PC-9 (cell line): ENCODE measurements at regions of chr15 and their contacts with region 1.

Region 1: DNA sequence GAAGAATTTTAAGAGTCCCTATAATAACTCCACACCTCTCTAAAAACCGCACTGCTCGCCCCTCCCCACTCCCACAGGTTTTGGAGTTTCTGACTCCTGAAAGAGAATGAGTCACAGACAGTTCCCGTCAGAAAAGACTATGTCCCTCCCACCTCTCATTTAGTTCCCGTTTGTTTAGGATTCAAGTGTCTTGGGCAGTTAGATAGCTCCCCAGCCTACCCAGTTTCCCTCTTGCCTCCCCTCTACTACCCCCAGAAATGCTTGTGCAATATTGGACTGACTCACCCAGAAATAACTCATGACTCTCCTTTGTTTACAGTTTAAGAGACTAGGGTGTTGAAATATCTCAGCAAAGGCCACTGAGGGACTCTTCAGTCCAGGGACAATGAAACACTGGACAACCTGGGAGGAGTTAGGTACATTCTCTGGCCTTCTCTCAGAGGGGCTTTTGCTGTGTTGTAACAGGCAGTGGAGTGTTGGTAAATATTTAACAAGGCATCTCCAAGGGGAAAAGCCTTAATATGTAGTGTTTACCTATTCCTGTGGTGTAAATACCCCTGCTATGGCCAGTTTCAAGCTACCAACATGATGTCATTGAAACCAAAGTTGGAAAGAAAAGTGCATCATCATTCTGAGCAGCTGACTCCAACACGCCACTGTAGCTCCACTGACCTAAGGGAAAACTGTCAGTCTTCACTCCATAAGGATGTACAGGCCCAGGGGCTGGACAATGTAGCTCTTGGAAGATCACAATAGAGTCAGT is 96.1 kb upstream of the CHD2 start:
- DNase-seq: peak; percentile 92 to 100
- H3K4me3 ChIP-seq: no peak overlapping the region; the same call in 1 of the 2 replicates
- H3K27ac ChIP-seq: peak overlapping the region; percentile 98
- H3K4me1 ChIP-seq: peaks cover 57% of the 10 kb centered on the region
- H3K27me3 ChIP-seq: no peaks in the 10 kb centered on the region
- CTCF ChIP-seq: no peak

Region 2: GRCh38 chr15:92617549-92618520 is 186.2 kb before region 1 on chr15:
- CTCF ChIA-PET with region 1: no interaction called
- POLR2A ChIA-PET with region 1: interaction called, 29 read pairs
- intact Hi-C with region 1: no loop called
- DNase-seq: peak; percentile 40 to 57
- H3K4me3 ChIP-seq: no peak overlapping the region
- H3K27ac ChIP-seq: 0 out of 2 replicates have a peak overlapping the region, but pooled peaks have one; percentile 11
- H3K4me1 ChIP-seq: no peaks in the 10 kb centered on the region; the same call in 1 of the 2 replicates
- H3K27me3 ChIP-seq: no peaks in the 10 kb centered on the region
- CTCF ChIP-seq: no peak

Region 3: GRCh38 chr15:92747047-92747446 is 57.0 kb before region 1 on chr15:
- CTCF ChIA-PET with region 1: no interaction called
- POLR2A ChIA-PET with region 1: no interaction called
- intact Hi-C with region 1: no loop called
- DNase-seq: no peak
- H3K4me3 ChIP-seq: no peak overlapping the region
- H3K27ac ChIP-seq: no peak overlapping the region
- H3K4me1 ChIP-seq: peaks cover 11% of the 10 kb centered on the region
- H3K27me3 ChIP-seq: no peaks in the 10 kb centered on the region
- CTCF ChIP-seq: no peak

Region 4: DNA sequence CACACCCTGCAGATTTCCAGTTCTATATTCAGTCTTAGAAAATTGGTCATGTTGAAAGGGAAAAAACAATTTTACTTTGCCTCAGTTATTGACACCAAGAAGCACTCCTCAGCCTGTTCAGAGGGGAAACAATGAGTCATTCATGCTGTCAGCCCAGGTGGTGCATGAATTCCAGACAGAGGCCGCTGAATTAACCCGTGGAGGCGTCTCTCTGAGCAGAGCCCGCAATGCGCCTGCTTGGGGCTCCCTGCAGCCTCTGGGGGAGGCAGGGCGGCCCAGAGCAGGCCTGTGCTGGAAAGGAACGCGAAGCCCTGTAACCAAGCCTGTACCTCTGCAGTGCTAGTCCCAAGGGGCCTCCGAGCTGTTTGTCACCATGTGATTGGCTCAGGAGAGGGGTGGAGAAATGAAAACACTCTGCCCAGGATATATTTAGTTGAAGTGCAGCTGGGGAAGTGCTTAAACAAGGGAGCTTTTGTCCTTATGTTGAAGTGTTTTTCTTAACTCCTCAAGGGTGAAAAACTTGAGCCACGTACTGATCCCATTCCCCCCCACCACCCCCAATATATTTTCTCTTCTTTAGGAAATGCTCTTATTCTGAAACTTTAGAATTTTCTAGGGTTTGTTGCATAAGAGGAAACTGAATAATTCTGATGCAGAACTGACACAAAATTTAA is 27.8 kb after region 1 on chr15:
- CTCF ChIA-PET with region 1: no interaction called
- POLR2A ChIA-PET with region 1: no interaction called
- intact Hi-C with region 1: no loop called
- DNase-seq: peak; percentile 93 to 94
- H3K4me3 ChIP-seq: peak overlapping the region; percentile 35
- H3K27ac ChIP-seq: peak overlapping the region; percentile 76
- H3K4me1 ChIP-seq: peaks cover 35% of the 10 kb centered on the region
- H3K27me3 ChIP-seq: no peaks in the 10 kb centered on the region
- CTCF ChIP-seq: no peak

Region 5: GRCh38 chr15:92848852-92849598 is 45.0 kb after region 1 on chr15:
- CTCF ChIA-PET with region 1: no interaction called
- POLR2A ChIA-PET with region 1: no interaction called
- intact Hi-C with region 1: no loop called
- DNase-seq: no peak
- H3K4me3 ChIP-seq: no peak overlapping the region
- H3K27ac ChIP-seq: no peak overlapping the region
- H3K4me1 ChIP-seq: peaks cover 27% of the 10 kb centered on the region
- H3K27me3 ChIP-seq: no peaks in the 10 kb centered on the region
- CTCF ChIP-seq: no peak

Region 6: GRCh38 chr15:92917606-92918407 is 113.8 kb after region 1 on chr15:
- CTCF ChIA-PET with region 1: no interaction called
- POLR2A ChIA-PET with region 1: interaction called, 5 read pairs
- intact Hi-C with region 1: loop called (anchors 1 kb)
- DNase-seq: peak; percentile 88 to 94
- H3K4me3 ChIP-seq: peak overlapping the region; percentile 42; the same call in 1 of the 2 replicates
- H3K27ac ChIP-seq: peak overlapping the region; percentile 97
- H3K4me1 ChIP-seq: peaks cover 97% of the 10 kb centered on the region
- H3K27me3 ChIP-seq: no peaks in the 10 kb centered on the region
- CTCF ChIP-seq: peak; percentile 91

Region 7: GRCh38 chr15:92979011-92979701 is 175.1 kb after region 1 on chr15:
- CTCF ChIA-PET with region 1: no interaction called
- POLR2A ChIA-PET with region 1: no interaction called
- intact Hi-C with region 1: loop called (anchors 1 kb)
- DNase-seq: no peak
- H3K4me3 ChIP-seq: no peak overlapping the region
- H3K27ac ChIP-seq: peak overlapping the region; percentile 31
- H3K4me1 ChIP-seq: peaks cover 41% of the 10 kb centered on the region
- H3K27me3 ChIP-seq: no peaks in the 10 kb centered on the region
- CTCF ChIP-seq: no peak

Region 8: DNA sequence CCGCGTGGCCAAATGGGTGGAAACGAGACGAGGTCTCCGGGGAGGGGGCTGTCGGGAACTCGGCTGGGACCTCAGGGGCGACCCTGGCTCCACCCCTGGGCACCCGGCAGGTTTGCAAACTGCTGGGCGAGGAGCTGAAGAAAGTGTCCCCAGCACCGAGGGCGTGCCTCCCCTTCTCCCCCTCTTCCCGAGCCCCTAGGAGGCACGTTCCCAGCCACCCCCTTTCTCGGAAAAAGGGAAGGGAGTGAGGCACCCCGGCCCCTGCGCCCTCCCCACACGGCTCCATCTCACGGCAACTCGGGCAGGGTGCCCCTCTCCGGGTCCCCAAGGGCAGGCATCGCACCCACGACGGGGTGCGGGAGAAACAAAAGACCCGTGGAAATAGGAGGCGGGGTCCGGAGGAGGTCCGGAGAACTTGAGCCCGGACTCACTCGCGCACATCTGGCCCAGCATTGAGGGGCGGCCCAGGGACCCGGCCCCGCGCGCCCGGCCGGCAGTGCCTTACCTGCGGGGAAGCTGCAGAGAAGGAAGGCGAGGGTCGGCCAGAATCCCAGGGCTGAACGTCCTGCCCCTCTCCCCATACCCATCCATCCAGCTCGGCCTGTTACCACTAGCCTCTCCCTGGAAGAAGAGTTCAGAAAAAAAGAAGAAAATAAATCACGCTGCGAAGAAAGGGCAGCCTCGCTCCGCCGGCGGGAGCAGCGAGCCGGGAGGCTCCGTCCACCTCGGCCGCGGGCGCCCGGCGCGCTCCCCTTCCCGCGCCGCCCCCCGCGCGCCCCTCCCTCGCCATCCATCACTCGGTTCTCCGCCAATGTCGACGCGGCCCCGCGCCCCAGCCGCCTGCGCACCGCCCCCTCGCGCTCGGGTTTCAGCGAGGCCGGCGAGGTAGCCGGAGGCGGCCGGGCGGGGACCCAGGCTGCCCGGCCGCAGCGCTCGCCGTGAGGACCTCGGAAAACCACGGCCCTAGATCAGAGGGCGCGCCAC is 268.7 kb after region 1 on chr15:
- CTCF ChIA-PET with region 1: no interaction called
- POLR2A ChIA-PET with region 1: no interaction called
- intact Hi-C with region 1: loop called (anchors 5 kb)
- DNase-seq: peak; percentile 60 to 84
- H3K4me3 ChIP-seq: peak overlapping the region; percentile 79
- H3K27ac ChIP-seq: no peak overlapping the region
- H3K4me1 ChIP-seq: peaks cover 9% of the 10 kb centered on the region
- H3K27me3 ChIP-seq: peaks cover 19% of the 10 kb centered on the region
- CTCF ChIP-seq: no peak

Region 9: DNA sequence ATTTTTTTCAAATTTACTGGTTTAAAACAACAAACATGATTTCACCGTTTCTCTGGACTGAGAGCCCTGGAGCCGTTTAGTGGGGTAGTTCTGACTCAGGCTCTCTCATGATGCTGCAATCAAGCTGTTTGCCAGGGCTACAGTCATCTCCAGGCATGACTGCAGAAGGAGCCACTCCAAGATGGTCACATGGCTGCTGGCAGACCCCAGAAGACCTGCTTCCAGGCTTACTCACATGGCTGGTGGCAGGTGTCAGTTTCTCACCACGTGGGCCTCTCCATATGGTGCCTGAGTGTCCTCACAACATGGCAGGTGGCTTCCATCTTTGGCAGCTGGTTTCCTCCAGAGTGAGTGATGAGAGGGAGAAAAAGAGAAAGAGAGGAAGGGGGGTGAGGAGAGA is 663.3 kb after region 1 on chr15:
- CTCF ChIA-PET with region 1: no interaction called
- POLR2A ChIA-PET with region 1: no interaction called
- intact Hi-C with region 1: no loop called
- DNase-seq: no peak
- H3K4me3 ChIP-seq: no peak overlapping the region
- H3K27ac ChIP-seq: no peak overlapping the region
- H3K4me1 ChIP-seq: no peaks in the 10 kb centered on the region
- H3K27me3 ChIP-seq: peaks cover 56% of the 10 kb centered on the region
- CTCF ChIP-seq: no peak